ENCODE measurements at regions of chr18 and their contacts with region 1.

Region 1: GRCh38 chr18:67217551-67218166 is 298.9 kb downstream of the DSEL start:
- DNase-seq: peak; percentile 45 to 66
- H3K4me3 ChIP-seq: no peak overlapping the region
- H3K4me1 ChIP-seq: no peaks in the 10 kb centered on the region
- H3K27me3 ChIP-seq: no peaks in the 10 kb centered on the region

Region 2: DNA sequence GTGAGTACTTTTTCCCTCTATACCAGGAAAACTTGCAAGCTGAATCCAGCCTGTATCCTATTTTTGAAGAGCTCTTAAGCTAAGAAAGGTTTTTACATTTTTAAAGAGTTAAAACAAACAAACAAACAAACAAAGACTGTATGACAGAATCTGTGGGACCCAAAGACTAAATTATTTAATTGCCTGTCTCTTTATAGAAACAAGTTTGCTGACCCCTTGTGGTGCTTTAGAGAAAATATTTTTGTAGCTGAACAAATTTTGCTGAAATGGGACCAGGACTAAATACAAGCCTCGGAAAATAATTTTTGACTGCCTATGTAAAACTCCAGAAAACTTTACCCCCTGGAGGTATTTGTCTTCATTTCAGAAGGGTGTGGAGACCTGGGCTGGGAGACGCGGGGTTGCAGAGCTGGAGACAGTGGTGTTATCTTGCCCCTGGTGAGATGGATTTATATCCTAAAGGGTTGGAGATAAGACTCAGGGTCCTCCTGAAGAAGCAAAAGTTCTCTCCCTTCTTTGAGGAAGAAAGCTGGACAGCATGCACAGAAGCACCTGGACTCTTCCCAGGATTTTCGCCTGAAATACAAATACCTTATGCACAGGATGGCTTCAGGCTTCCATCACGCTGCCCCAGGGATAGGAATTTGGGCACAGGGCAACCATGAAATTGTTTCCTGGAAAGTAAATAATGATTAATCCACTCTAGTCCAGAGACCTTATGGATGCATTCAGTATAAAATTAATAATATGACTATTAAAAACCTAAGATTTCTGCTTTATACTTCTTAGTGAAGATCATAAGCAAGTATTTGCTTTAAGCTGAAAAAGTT is 1442.9 kb after region 1 on chr18:
- in situ Hi-C with region 1: loop called (anchors 25 kb)
- DNase-seq: peak in 1 of 2 experiments; percentile 53
- H3K4me3 ChIP-seq: no peak overlapping the region
- H3K4me1 ChIP-seq: no peaks in the 10 kb centered on the region
- H3K27me3 ChIP-seq: no peaks in the 10 kb centered on the region

Region 3: DNA sequence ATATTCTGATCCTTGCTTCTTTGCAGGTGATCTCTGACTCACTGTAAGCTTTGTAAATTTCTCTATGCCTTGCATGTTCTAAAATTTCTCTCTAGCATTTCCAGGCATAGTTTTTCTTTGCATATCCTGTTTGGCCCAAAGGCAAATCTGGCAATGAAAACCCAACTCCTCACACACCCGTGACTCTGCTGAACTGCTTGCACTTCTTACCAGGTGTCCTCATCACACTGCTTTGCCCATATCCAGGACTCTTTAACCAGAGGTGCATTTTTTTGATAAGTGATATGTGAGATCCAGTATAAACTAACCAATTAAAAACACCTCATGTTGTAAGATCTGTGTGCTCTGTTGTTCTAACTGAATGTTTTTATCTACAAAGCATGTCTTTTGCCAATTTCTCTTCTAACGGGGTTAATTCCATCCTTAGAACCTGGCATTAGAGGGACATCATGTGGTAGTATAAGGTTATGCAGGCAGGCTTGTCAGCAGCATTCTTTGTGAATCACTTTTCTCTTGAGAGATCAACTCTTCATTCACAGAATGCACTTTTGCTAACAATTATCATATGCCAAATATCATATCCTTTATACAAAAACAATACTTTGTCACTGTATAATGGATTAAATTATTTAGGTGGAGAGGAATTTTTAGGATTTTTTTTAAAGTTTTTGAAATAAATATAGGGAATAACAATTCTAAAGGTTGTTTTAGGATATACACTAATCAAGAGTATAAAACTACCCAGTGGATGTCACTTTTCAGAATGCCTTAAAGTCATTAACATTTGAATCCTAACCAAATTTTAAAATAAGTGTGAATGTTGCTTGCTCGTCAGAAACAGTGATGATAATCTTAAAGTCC is 1518.1 kb after region 1 on chr18:
- in situ Hi-C with region 1: loop called (anchors 25 kb)
- DNase-seq: peak in 1 of 2 experiments; percentile 64
- H3K4me3 ChIP-seq: no peak overlapping the region
- H3K4me1 ChIP-seq: no peaks in the 10 kb centered on the region
- H3K27me3 ChIP-seq: no peaks in the 10 kb centered on the region

Measured in HAP-1 (cell line).